Calu3 (cell line): ENCODE measurements at regions of chr20 and their contacts with region 1.

Region 1: GRCh38 chr20:2523919-2524708 is 12.3 kb upstream of the TMC2 start:
- DNase-seq: peak; percentile 84
- H3K4me3 Mint-ChIP-seq: peak overlapping the region; percentile 87
- H3K27ac Mint-ChIP-seq: no peak overlapping the region
- H3K4me1 Mint-ChIP-seq: no peaks in the 10 kb centered on the region
- H3K27me3 Mint-ChIP-seq: peaks cover 41% of the 10 kb centered on the region
- CTCF ChIP-seq: peak; percentile 88

Region 2: GRCh38 chr20:2599288-2600006 is 75.3 kb after region 1 on chr20:
- CTCF ChIA-PET with region 1: no interaction called
- intact Hi-C with region 1: no loop called
- DNase-seq: no peak
- H3K4me3 Mint-ChIP-seq: no peak overlapping the region
- H3K27ac Mint-ChIP-seq: no peak overlapping the region
- H3K4me1 Mint-ChIP-seq: no peaks in the 10 kb centered on the region
- H3K27me3 Mint-ChIP-seq: peaks cover 6% of the 10 kb centered on the region
- CTCF ChIP-seq: no peak

Region 3: GRCh38 chr20:2631228-2631627 is 107.1 kb after region 1 on chr20:
- CTCF ChIA-PET with region 1: interaction called, 5 read pairs
- intact Hi-C with region 1: loop called (anchors 5 kb)
- DNase-seq: no peak
- H3K4me3 Mint-ChIP-seq: no peak overlapping the region
- H3K27ac Mint-ChIP-seq: no peak overlapping the region
- H3K4me1 Mint-ChIP-seq: peaks cover 11% of the 10 kb centered on the region
- H3K27me3 Mint-ChIP-seq: peaks cover 21% of the 10 kb centered on the region
- CTCF ChIP-seq: no peak

Region 4: DNA sequence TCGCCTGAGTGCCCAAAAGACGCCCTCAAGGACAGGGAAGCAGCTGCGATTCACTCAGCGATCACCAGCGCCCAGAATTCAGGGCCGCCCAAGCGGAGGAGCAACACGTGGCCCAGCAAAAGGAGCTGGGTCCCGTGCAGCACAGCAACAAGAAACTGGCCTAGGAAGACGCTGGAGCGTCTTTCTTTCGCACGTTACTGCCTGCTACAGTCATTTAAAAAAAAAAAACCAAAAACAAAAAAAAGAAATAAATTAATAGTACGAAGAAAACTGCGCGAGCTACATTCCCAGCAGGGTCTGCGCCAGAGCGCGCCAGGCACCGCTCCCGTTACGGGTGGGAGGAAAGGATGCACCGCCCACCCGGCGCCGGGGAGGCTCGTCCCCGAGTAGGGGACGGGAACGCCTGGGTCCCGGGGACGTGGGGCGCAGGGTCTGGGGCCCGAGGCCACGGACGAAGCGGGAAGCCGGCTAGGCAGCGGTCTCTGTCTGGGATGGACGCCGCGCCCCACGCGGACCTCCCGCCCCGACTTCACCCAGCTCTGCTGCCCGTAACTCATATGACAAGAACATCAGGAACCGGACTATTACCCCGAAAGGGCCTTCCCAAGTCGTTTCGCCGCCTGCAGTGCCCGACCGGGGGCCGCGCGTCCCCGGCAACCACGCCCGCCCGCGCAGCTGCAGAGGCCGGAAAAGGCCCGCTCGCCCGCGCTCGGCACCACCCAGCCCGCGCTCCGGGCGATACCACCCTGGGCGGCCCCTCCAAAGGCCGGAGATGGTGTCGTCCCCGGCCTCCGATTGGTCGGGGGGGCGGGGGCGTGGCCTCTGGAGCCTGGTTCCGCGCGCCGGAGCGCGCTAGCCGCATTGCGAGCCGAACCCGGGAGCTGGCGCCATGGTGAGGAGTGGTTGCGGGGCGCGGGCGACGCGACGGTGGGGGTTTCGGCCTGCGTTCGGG is 127.9 kb after region 1 on chr20 and contains the start of gene NOP56:
- CTCF ChIA-PET with region 1: interaction called, 3 read pairs
- intact Hi-C with region 1: loop called (anchors 1 kb)
- DNase-seq: peak; percentile 93
- H3K4me3 Mint-ChIP-seq: peak within 1 kb of the TSS; percentile 81
- H3K27ac Mint-ChIP-seq: peak within 1 kb of the TSS; percentile 70
- H3K4me1 Mint-ChIP-seq: peaks cover 9% of the 10 kb centered on the region
- H3K27me3 Mint-ChIP-seq: no peaks in the 10 kb centered on the region
- CTCF ChIP-seq: no peak
- total RNA-seq, gene NOP56: 303 and 310 TPM in 2 replicates